Activated CD4-positive, alpha-beta T cell treated with anti-CD3 and anti-CD28 coated beads for 36 hours (primary cell): ENCODE measurements at regions of chr3 and their contacts with region 1.

Region 1: GRCh38 chr3:18758047-18758704 is 333.0 kb upstream of the SATB1 start:
- DNase-seq: no peak
- ATAC-seq: peak; percentile 95
- H3K4me3 Mint-ChIP-seq: no peak overlapping the region
- H3K27ac Mint-ChIP-seq: peak overlapping the region; percentile 90
- H3K4me1 Mint-ChIP-seq: peaks cover 48% of the 10 kb centered on the region
- H3K27me3 Mint-ChIP-seq: no peaks in the 10 kb centered on the region

Region 2: GRCh38 chr3:17894434-17895060 is 863.6 kb before region 1 on chr3:
- CTCF ChIA-PET with region 1: interaction called, 3 read pairs
- POLR2A ChIA-PET with region 1: no interaction called
- intact Hi-C with region 1: loop called in 1 of 2 experiments (anchors 5 kb)
- DNase-seq: peak; percentile 71
- ATAC-seq: peak; percentile 81
- H3K4me3 Mint-ChIP-seq: no peak overlapping the region
- H3K27ac Mint-ChIP-seq: no peak overlapping the region
- H3K4me1 Mint-ChIP-seq: no peaks in the 10 kb centered on the region
- H3K27me3 Mint-ChIP-seq: no peaks in the 10 kb centered on the region

Region 3: GRCh38 chr3:18424729-18425640 is 333.2 kb before region 1 on chr3 and contains the start of gene SATB1:
- CTCF ChIA-PET with region 1: interaction called, 3 read pairs
- POLR2A ChIA-PET with region 1: interaction called, 12 read pairs
- intact Hi-C with region 1: loop called in 1 of 2 experiments (anchors 5 kb)
- DNase-seq: peak; percentile 84
- ATAC-seq: peak; percentile 15
- H3K4me3 Mint-ChIP-seq: peak within 1 kb of the TSS; percentile 85
- H3K27ac Mint-ChIP-seq: peak within 1 kb of the TSS; percentile 97
- H3K4me1 Mint-ChIP-seq: peaks cover 71% of the 10 kb centered on the region
- H3K27me3 Mint-ChIP-seq: no peaks in the 10 kb centered on the region
- total RNA-seq, gene SATB1: 471 to 590 TPM

Region 4: GRCh38 chr3:18669374-18669773 is 88.8 kb before region 1 on chr3:
- CTCF ChIA-PET with region 1: interaction called, 10 read pairs
- POLR2A ChIA-PET with region 1: no interaction called
- intact Hi-C with region 1: no loop called
- DNase-seq: peak; percentile 61
- ATAC-seq: peak; percentile 77
- H3K4me3 Mint-ChIP-seq: no peak overlapping the region
- H3K27ac Mint-ChIP-seq: peak overlapping the region; percentile 82
- H3K4me1 Mint-ChIP-seq: peaks cover 60% of the 10 kb centered on the region
- H3K27me3 Mint-ChIP-seq: no peaks in the 10 kb centered on the region

Region 5: DNA sequence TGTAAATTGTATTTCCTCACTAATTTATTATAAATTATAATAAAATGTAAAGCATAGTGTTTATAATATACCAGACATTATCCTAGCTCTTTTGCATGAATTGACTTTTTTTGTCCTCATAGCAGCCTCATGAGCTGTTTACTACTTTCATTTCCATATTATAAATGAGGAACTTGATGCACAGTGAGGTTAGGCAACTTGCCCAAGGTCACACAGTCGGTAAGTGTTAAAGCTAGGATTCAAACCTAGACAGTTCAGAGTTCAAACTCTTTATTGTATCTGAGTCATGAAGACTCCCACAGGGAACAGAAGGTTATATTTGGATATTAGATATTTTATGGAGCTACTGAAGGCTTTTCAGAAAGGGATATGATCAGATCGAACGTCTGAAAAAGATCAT is 10.8 kb before region 1 on chr3:
- CTCF ChIA-PET with region 1: interaction called, 26 read pairs
- POLR2A ChIA-PET with region 1: interaction called, 5 read pairs
- intact Hi-C with region 1: loop called in 1 of 2 experiments (anchors 1 kb)
- DNase-seq: no peak
- ATAC-seq: no peak
- H3K4me3 Mint-ChIP-seq: no peak overlapping the region
- H3K27ac Mint-ChIP-seq: no peak overlapping the region
- H3K4me1 Mint-ChIP-seq: peaks cover 84% of the 10 kb centered on the region
- H3K27me3 Mint-ChIP-seq: no peaks in the 10 kb centered on the region